ENCODE measurements at regions of chr6 and their contacts with region 1.

Region 1: GRCh38 chr6:26473758-26474438 is 16.1 kb downstream of the BTN2A1 start:
- DNase-seq: peak; percentile 94
- ATAC-seq: peak; percentile 94
- H3K4me3 ChIP-seq: peak overlapping the region; percentile 68
- H3K27ac ChIP-seq: peak overlapping the region; percentile 52
- H3K4me1 ChIP-seq: peaks cover 30% of the 10 kb centered on the region
- H3K27me3 ChIP-seq: no peaks in the 10 kb centered on the region
- CTCF ChIP-seq: no peak

Region 2: DNA sequence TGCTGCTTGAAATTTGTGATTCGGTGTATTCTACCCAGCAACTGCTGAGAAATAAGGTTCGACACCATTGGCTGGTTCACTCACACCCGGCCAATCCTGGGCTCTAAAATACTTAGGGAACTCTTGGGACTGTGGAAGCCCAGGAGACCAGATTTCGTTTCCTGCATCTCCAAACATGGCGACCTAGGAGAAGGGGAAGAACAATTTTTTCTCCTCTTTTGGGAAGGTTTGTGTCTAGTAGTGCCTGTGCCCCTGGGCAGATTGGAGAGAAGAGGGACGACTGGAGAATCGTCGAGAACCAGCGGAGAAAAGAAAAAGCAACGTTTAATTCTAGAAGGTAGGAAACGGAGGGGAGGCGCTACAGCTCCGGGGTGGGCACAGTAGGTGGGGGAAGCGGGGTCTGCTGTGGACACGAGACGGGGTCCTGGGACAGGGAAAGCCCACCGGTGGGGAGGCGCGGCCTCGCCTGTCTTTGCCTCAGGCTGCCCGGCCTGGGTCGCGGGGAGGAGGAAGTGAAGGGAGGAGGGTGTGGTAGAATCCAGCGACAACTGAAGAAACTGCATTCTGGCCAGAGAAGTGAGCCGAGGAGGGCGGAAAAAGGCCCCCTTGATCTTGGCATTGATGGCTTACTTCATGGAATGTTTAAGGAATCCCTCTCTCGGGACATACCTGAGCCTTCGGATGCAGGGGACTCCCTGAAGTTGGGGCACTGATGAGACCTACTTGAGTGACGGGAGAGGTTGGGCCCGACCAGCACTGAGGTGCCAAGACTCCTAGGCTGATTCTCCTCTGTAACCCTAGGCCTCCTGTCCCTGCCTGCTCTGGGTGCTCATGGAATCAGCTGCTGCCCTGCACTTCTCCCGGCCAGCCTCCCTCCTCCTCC is 15.9 kb before region 1 on chr6 and contains the start of gene BTN2A1:
- CTCF ChIA-PET with region 1: no interaction called
- POLR2A ChIA-PET with region 1: no interaction called
- intact Hi-C with region 1: loop called (anchors 1 kb)
- DNase-seq: peak; percentile 94
- ATAC-seq: peak; percentile 99
- H3K4me3 ChIP-seq: peak within 1 kb of the TSS; percentile 78
- H3K27ac ChIP-seq: peak within 1 kb of the TSS; percentile 48
- H3K4me1 ChIP-seq: peaks cover 21% of the 10 kb centered on the region
- H3K27me3 ChIP-seq: no peaks in the 10 kb centered on the region
- CTCF ChIP-seq: no peak; the same call in 1 of the 2 replicates
- total RNA-seq, gene BTN2A1: 13.1 and 14.6 TPM in 2 replicates

Region 3: GRCh38 chr6:26493258-26493657 is 19.4 kb after region 1 on chr6:
- CTCF ChIA-PET with region 1: no interaction called
- POLR2A ChIA-PET with region 1: no interaction called
- intact Hi-C with region 1: no loop called
- DNase-seq: peak; percentile 27
- ATAC-seq: peak; percentile 88
- H3K4me3 ChIP-seq: no peak overlapping the region
- H3K27ac ChIP-seq: no peak overlapping the region
- H3K4me1 ChIP-seq: no peaks in the 10 kb centered on the region
- H3K27me3 ChIP-seq: no peaks in the 10 kb centered on the region
- CTCF ChIP-seq: peak; percentile 38; the same call in 1 of the 2 replicates

Region 4: GRCh38 chr6:26613689-26614683 is 140.1 kb after region 1 on chr6:
- CTCF ChIA-PET with region 1: no interaction called
- POLR2A ChIA-PET with region 1: no interaction called
- intact Hi-C with region 1: no loop called
- DNase-seq: no peak
- ATAC-seq: no peak
- H3K4me3 ChIP-seq: no peak overlapping the region
- H3K27ac ChIP-seq: no peak overlapping the region
- H3K4me1 ChIP-seq: no peaks in the 10 kb centered on the region
- H3K27me3 ChIP-seq: no peaks in the 10 kb centered on the region
- CTCF ChIP-seq: no peak

Measured in PC-3 (cell line).